Dorsolateral prefrontal cortex (tissue), 120 donors: ENCODE measurements at regions of chr17 and their contacts with region 1.

Region 1: GRCh38 chr17:76868176-76868668 is at the start of gene MGAT5B:
- DNase-seq: peak; percentile 42 to 86 (median 70)
- H3K4me3 ChIP-seq: peak within 1 kb of the TSS; percentile 28 to 73 (median 59)
- H3K27ac ChIP-seq: peak within 1 kb of the TSS in 56 of 59 donors; percentile 32 to 86 (median 68)
- H3K27me3 ChIP-seq: peaks cover 0 to 25% (median 9%) of the 10 kb centered on the region in 45 donors
- CTCF ChIP-seq: peak; percentile 17 to 94 (median 80)
- total RNA-seq, gene MGAT5B: 25.5 to 227 (median 115) TPM

Region 2: GRCh38 chr17:77054936-77055335 is 186.7 kb after region 1 on chr17:
- intact Hi-C with region 1: loop called (anchors 1 kb)
- DNase-seq: no peak
- H3K4me3 ChIP-seq: no peak overlapping the region
- H3K27ac ChIP-seq: no peak overlapping the region
- H3K27me3 ChIP-seq: peaks cover 0 to 10% (median 0%) of the 10 kb centered on the region in 45 donors
- CTCF ChIP-seq: no peak

Region 3: DNA sequence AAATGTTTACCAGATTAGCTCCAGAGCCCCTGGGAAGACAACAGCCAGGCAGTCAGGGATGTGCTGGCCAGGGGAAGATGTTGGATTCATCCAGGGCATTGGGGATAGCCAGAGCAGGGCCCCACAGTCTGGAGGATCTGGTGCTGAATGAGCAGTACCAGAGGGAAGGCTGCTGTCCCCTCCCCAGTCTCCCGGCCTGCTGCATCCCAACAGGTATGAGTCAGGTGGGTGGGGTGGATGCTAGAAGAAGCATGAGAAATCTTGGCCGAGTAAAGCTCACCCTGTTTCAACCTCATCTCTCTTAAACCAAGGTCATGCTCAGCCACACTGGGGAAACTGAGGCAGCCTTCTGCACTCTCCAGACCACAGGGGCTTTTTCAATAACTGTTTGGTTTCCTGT is 200.7 kb after region 1 on chr17:
- intact Hi-C with region 1: loop called in 1 of 2 experiments (anchors 1 kb)
- DNase-seq: no peak
- H3K4me3 ChIP-seq: no peak overlapping the region
- H3K27ac ChIP-seq: no peak overlapping the region
- H3K27me3 ChIP-seq: peaks cover 0 to 20% (median 0%) of the 10 kb centered on the region in 45 donors
- CTCF ChIP-seq: no peak

Region 4: GRCh38 chr17:77247048-77247541 is 378.9 kb after region 1 on chr17:
- intact Hi-C with region 1: loop called (anchors 5 to 10 kb)
- DNase-seq: peak; percentile 68 to 91 (median 78)
- H3K4me3 ChIP-seq: peak overlapping the region; percentile 50 to 93 (median 76)
- H3K27ac ChIP-seq: peak overlapping the region in 52 of 59 donors; percentile 7 to 92 (median 68)
- H3K27me3 ChIP-seq: no peaks in the 10 kb centered on the region
- CTCF ChIP-seq: peak; percentile 87 to 100 (median 99)

Region 5: GRCh38 chr17:77254951-77255825 is 387.0 kb after region 1 on chr17:
- intact Hi-C with region 1: loop called in 1 of 2 experiments (anchors 10 kb)
- DNase-seq: peak in 1 of 10 donors; percentile 27
- H3K4me3 ChIP-seq: no peak overlapping the region
- H3K27ac ChIP-seq: peak overlapping the region in 4 of 59 donors; percentile 1 to 36 (median 29)
- H3K27me3 ChIP-seq: peaks cover 0 to 4% (median 0%) of the 10 kb centered on the region in 45 donors
- CTCF ChIP-seq: no peak